ENCODE measurements at regions of chr7 and their contacts with region 1.

Region 1: DNA sequence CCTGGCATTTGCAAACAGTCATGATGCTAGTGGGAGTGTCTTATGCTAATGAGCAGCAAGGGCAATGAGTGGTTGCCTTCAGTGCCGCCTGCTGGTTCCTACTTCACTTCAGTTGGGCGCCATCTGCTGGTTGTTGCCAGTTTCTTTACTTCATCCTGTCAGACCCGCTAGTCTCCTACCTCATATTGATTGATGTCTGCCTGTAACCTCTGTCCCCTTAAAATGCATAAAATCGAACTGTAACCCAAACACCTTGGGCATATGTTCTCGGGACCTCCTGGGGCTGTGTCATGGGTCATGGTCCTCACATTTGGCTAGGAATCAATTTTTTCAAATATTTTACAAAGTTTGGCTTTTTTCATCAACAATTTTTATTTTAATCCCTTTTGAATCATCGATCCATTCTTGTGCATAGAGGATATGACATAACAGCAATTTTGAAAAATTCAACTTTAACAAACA is 62.8 kb upstream of the C7orf33 start:
- DNase-seq: peak; percentile 85
- H3K4me3 ChIP-seq: no peak overlapping the region
- H3K27ac ChIP-seq: no peak overlapping the region
- H3K4me1 ChIP-seq: no peaks in the 10 kb centered on the region
- H3K27me3 ChIP-seq: no peaks in the 10 kb centered on the region
- CTCF ChIP-seq: peak; percentile 53

Region 2: DNA sequence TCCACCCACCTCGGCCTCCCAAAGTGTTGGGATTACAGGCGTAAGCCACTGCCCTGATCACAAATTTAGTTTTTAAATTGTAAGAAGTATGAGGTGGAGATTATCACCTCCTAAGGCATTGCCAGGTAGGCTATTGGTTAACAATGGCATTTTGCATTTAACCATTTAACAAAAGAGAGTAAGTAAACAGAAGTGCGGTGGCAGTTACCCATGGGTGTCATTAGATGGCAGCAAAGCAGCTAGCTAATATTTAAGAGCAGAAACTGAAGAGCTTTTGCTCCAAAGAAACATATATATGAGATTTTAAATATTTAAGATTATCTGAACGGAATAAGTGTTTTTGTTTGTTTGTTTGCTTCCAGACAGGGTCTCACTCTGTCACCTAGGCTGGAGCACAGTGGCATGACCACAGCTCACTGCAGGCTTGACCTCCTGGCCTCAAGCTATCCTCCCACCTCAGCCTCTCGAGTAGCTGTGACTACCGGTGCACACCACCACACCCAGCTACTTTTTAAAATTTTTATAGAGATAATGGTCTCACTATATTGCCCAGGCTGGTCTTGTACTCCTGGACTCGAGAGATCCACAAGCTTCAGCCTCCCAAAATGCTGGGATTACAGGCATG is 262.7 kb before region 1 on chr7:
- intact Hi-C with region 1: loop called (anchors 5 kb)
- DNase-seq: no peak
- H3K4me3 ChIP-seq: no peak overlapping the region
- H3K27ac ChIP-seq: no peak overlapping the region
- H3K4me1 ChIP-seq: no peaks in the 10 kb centered on the region
- H3K27me3 ChIP-seq: no peaks in the 10 kb centered on the region
- CTCF ChIP-seq: peak; percentile 66

Region 3: GRCh38 chr7:148503875-148504487 is 23.8 kb before region 1 on chr7:
- intact Hi-C with region 1: loop called (anchors 2 kb)
- DNase-seq: no peak
- H3K4me3 ChIP-seq: no peak overlapping the region
- H3K27ac ChIP-seq: no peak overlapping the region
- H3K4me1 ChIP-seq: no peaks in the 10 kb centered on the region
- H3K27me3 ChIP-seq: no peaks in the 10 kb centered on the region
- CTCF ChIP-seq: peak; percentile 77

Region 4: GRCh38 chr7:148584154-148584827 is 56.6 kb after region 1 on chr7:
- intact Hi-C with region 1: no loop called
- DNase-seq: no peak
- H3K4me3 ChIP-seq: no peak overlapping the region
- H3K27ac ChIP-seq: no peak overlapping the region
- H3K4me1 ChIP-seq: no peaks in the 10 kb centered on the region
- H3K27me3 ChIP-seq: no peaks in the 10 kb centered on the region
- CTCF ChIP-seq: no peak